ENCODE measurements at regions of chr13 and their contacts with region 1.

Region 1: DNA sequence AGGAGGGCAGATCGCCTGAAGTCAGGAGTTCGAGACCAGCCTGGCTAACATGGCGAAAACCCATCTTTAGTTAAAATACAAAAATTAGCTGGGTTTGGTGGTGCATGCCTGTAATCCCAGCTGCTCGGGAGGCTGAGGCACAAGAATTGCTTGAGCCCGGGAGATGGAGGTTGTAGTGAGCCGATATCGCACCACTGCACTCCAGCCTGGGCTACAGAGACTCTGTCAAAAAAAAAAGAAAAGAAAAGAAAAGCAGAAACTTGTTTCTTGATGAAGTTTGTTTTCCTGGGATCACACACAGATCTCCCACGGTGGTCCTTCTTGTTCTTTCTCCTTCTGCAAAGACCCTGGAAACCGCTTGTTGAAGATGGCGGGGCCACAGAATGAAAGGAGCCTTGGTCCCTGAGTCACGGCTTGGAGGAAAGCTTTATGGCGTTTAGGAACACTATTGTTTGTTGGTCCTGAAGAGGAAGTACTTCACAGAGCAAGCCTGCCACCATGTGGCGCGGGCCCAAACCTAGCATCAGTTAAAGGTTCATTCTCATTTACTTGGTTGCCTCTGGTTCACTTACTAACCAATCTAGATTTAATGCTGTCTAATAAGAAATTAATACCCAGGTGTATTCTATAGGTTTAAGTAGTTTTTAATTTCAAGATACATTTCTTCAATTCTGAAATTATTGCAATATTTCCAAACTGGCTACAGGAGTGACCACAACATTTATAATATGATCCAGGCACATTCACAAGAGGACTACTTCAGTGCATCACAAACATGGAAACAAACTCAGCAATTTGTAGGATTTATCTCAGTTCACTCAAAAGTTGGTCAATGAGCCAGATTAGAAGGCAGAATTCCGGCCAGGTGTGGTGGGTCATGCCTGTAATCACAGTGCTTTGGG is 21.3 kb upstream of the ARL11 start:
- DNase-seq: peak; percentile 85
- ATAC-seq: peak; percentile 95
- H3K4me3 ChIP-seq: peak overlapping the region; percentile 7 to 45 (median 36)
- H3K4me3 Mint-ChIP-seq: peak overlapping the region; percentile 90
- H3K27ac ChIP-seq: no peak overlapping the region
- H3K27ac Mint-ChIP-seq: peak overlapping the region; percentile 92
- H3K4me1 ChIP-seq: peaks cover 12 to 19% of the 10 kb centered on the region in 2 donors
- H3K4me1 Mint-ChIP-seq: peaks cover 25% of the 10 kb centered on the region
- H3K27me3 ChIP-seq: no peaks in the 10 kb centered on the region
- H3K27me3 Mint-ChIP-seq: no peaks in the 10 kb centered on the region
- CTCF ChIP-seq: peak; percentile 84

Region 2: GRCh38 chr13:49240017-49240416 is 367.0 kb before region 1 on chr13:
- CTCF ChIA-PET with region 1: interaction called, 5 read pairs
- POLR2A ChIA-PET with region 1: no interaction called
- intact Hi-C with region 1: loop called (anchors 1 kb)
- DNase-seq: peak; percentile 47
- ATAC-seq: peak; percentile 33
- H3K4me3 ChIP-seq: no peak overlapping the region
- H3K4me3 Mint-ChIP-seq: no peak overlapping the region
- H3K27ac ChIP-seq: no peak overlapping the region
- H3K27ac Mint-ChIP-seq: no peak overlapping the region
- H3K4me1 ChIP-seq: no peaks in the 10 kb centered on the region
- H3K4me1 Mint-ChIP-seq: no peaks in the 10 kb centered on the region
- H3K27me3 ChIP-seq: no peaks in the 10 kb centered on the region
- H3K27me3 Mint-ChIP-seq: no peaks in the 10 kb centered on the region
- CTCF ChIP-seq: peak; percentile 55

Region 3: DNA sequence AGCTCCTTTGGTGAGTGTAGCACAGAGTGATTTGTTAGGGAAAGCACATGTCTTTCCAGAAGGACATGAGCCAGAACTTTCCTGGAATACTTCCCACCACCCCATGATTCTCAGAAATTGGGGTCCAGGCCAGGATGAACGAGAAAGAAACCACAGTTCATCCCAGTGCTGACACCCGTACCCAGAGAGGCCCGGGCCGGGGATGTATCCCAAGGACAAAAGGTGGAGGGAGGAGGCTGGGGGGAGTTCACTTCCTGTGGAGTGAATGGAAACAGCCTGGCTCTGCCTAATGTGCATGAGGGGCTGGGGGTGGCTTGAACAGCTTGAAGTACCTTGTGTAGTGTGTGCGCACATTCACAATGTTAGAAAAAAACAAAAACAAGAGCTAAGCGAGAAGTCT is 311.8 kb before region 1 on chr13:
- CTCF ChIA-PET with region 1: interaction called, 73 read pairs
- POLR2A ChIA-PET with region 1: interaction called, 5 read pairs
- intact Hi-C with region 1: no loop called
- DNase-seq: no peak
- ATAC-seq: no peak
- H3K4me3 ChIP-seq: no peak overlapping the region
- H3K4me3 Mint-ChIP-seq: no peak overlapping the region
- H3K27ac ChIP-seq: no peak overlapping the region
- H3K27ac Mint-ChIP-seq: no peak overlapping the region
- H3K4me1 ChIP-seq: no peaks in the 10 kb centered on the region
- H3K4me1 Mint-ChIP-seq: peaks cover 3% of the 10 kb centered on the region
- H3K27me3 ChIP-seq: no peaks in the 10 kb centered on the region
- H3K27me3 Mint-ChIP-seq: no peaks in the 10 kb centered on the region
- CTCF ChIP-seq: no peak

Region 4: DNA sequence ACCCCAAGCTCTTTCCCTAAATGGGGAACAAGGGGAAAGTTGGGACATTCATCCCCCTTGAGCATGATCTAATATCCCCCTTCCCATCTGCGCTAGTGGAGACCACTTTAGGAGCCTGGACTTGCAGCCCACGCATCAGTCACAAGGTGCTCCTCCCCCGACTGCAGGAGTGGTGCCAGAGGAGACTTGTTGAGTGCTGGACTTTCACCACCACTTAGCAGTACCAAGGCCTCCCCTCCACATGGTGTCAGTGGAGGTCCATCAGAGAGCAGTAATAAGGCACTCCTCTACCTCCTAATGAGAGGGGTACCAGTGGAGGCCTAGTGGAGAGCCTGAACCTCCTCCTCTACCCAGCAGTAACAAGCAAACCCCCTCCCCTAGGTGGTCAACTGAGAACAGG is 185.6 kb before region 1 on chr13:
- CTCF ChIA-PET with region 1: interaction called, 3 read pairs
- POLR2A ChIA-PET with region 1: no interaction called
- intact Hi-C with region 1: loop called (anchors 1 kb)
- DNase-seq: peak; percentile 39
- ATAC-seq: peak; percentile 61
- H3K4me3 ChIP-seq: no peak overlapping the region
- H3K4me3 Mint-ChIP-seq: no peak overlapping the region
- H3K27ac ChIP-seq: no peak overlapping the region
- H3K27ac Mint-ChIP-seq: no peak overlapping the region
- H3K4me1 ChIP-seq: no peaks in the 10 kb centered on the region
- H3K4me1 Mint-ChIP-seq: no peaks in the 10 kb centered on the region
- H3K27me3 ChIP-seq: no peaks in the 10 kb centered on the region
- H3K27me3 Mint-ChIP-seq: no peaks in the 10 kb centered on the region
- CTCF ChIP-seq: peak; percentile 26

Region 5: GRCh38 chr13:49495783-49496762 is 110.9 kb before region 1 on chr13 and contains the start of gene PHF11:
- CTCF ChIA-PET with region 1: interaction called, 8 read pairs
- POLR2A ChIA-PET with region 1: interaction called, 3 read pairs
- intact Hi-C with region 1: loop called (anchors 1 kb)
- DNase-seq: peak; percentile 92
- ATAC-seq: peak; percentile 80
- H3K4me3 ChIP-seq: peak within 1 kb of the TSS; percentile 67 to 90 (median 77)
- H3K4me3 Mint-ChIP-seq: peak within 1 kb of the TSS; percentile 95
- H3K27ac ChIP-seq: peak within 1 kb of the TSS; percentile 89 to 95
- H3K27ac Mint-ChIP-seq: peak within 1 kb of the TSS; percentile 99
- H3K4me1 ChIP-seq: peaks cover 6 to 20% of the 10 kb centered on the region in 2 donors
- H3K4me1 Mint-ChIP-seq: peaks cover 40% of the 10 kb centered on the region
- H3K27me3 ChIP-seq: no peaks in the 10 kb centered on the region
- H3K27me3 Mint-ChIP-seq: no peaks in the 10 kb centered on the region
- CTCF ChIP-seq: no peak
- total RNA-seq, gene PHF11: 176 and 181 TPM in 2 replicates

Region 6: DNA sequence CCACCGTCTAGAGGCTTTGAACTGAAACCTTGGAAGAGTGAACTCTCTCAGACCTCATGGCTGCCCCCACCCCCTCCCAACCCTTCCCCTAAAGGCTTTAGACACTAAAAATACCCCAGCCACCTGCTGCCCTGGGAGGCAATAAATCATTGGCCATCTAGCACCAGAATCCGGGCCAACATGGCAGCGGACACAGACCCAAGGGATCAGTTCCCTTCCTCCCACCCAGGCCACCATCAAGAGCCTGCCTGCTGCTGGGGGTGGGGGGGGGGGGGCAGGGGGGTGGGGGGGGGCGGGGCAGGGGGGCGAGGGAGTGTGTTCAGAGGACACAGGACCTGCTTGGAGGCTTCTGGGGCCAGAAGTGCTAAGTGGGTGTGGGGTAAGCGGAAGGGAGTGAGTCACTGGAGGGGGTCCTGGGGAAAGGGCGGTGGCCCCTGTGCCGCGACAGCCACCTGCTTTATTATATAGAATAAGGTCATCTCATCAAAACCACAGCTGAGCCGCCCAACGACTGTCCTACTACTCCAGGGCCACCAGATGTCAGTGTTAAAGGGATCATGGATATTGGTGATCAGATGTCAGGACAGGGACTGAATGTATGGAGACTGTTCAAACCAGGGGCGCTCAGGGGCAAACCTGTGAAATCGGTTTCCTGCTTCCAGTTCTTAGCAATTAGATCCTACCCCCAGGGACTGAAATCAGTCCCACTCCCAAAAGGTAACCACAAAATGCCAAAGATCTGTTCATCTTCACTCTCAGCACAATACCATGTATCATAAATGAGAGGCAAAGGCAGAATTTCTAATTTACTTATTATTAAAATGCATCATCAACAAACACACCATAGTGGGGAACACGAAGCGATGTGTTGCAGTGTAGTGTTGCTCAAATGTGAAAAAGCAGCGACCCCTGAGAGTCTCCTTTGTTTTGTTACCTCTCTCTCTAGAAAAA is 45.6 kb after region 1 on chr13:
- CTCF ChIA-PET with region 1: no interaction called
- POLR2A ChIA-PET with region 1: no interaction called
- intact Hi-C with region 1: no loop called
- DNase-seq: peak; percentile 43
- ATAC-seq: peak; percentile 65
- H3K4me3 ChIP-seq: no peak overlapping the region
- H3K4me3 Mint-ChIP-seq: no peak overlapping the region
- H3K27ac ChIP-seq: no peak overlapping the region
- H3K27ac Mint-ChIP-seq: no peak overlapping the region
- H3K4me1 ChIP-seq: no peaks in the 10 kb centered on the region
- H3K4me1 Mint-ChIP-seq: peaks cover 14% of the 10 kb centered on the region
- H3K27me3 ChIP-seq: no peaks in the 10 kb centered on the region
- H3K27me3 Mint-ChIP-seq: no peaks in the 10 kb centered on the region
- CTCF ChIP-seq: peak; percentile 47